Activated T-helper 2 cell treated with anti-CD3 and anti-CD28 coated beads, Interferon-gamma antibody, Interleukin-2, Interleukin-4, amounts not matched to agents 10 μg/mL and 5 μg/mL and 100 μg/mL, durations not matched to agents 14 hours and 24 hours and 36 hours (primary cell): ENCODE measurements at regions of chr20 and their contacts with region 1.

Region 1: GRCh38 chr20:35664544-35665221 is at the starts of genes CPNE1 and RBM12:
- DNase-seq: peak; percentile 93
- H3K4me3 Mint-ChIP-seq: peak within 1 kb of the TSS; percentile 95
- H3K27ac Mint-ChIP-seq: peak within 1 kb of the TSS; percentile 99
- H3K4me1 Mint-ChIP-seq: peaks cover 41% of the 10 kb centered on the region
- H3K27me3 Mint-ChIP-seq: no peaks in the 10 kb centered on the region
- total RNA-seq, gene CPNE1: 342 and 347 TPM in 2 replicates
- total RNA-seq, gene RBM12: 147 and 148 TPM in 2 replicates

Region 2: GRCh38 chr20:34876162-34877001 is 788.3 kb before region 1 on chr20 and contains the start of gene ACSS2:
- intact Hi-C with region 1: no loop called
- DNase-seq: peak; percentile 96
- H3K4me3 Mint-ChIP-seq: peak within 1 kb of the TSS; percentile 95
- H3K27ac Mint-ChIP-seq: peak within 1 kb of the TSS; percentile 84
- H3K4me1 Mint-ChIP-seq: peaks cover 66% of the 10 kb centered on the region
- H3K27me3 Mint-ChIP-seq: peaks cover 2% of the 10 kb centered on the region
- total RNA-seq, gene ACSS2: 51.3 and 59.4 TPM in 2 replicates

Region 3: GRCh38 chr20:35447082-35447789 is 217.4 kb before region 1 on chr20:
- intact Hi-C with region 1: no loop called
- DNase-seq: peak; percentile 85
- H3K4me3 Mint-ChIP-seq: peak overlapping the region; percentile 82
- H3K27ac Mint-ChIP-seq: no peak overlapping the region
- H3K4me1 Mint-ChIP-seq: peaks cover 6% of the 10 kb centered on the region
- H3K27me3 Mint-ChIP-seq: no peaks in the 10 kb centered on the region

Region 4: DNA sequence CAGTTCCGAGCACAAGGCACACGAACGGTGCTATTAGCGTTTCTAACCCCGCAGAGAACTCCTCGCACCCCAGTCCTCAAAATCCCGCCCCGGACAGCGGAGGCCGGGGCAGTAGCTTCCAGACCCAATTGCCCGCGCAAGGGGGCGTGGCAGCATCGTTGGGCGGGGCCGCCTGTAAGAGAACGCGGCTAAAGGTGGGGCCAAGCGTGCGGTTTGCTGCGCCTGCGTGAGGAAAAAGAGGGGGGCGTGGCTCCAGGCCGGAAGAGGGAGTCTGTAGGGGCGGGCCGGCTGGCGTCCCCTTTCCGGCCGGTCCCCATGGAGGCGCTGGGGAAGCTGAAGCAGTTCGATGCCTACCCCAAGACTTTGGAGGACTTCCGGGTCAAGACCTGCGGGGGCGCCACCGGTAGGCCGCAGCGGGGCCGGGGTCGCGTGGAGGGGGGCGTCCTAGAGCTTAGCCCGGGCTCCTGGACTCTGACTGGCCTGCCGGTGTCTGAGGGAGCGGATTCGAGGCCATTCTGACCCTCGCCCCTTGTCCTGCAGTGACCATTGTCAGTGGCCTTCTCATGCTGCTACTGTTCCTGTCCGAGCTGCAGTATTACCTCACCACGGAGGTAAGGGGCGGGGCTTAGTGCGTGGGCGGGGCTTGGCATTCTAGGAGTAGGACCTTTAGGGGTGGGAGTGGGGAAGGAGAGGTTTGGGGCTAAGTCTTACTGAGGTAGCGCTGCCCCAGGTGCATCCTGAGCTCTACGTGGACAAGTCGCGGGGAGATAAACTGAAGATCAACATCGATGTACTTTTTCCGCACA is 122.7 kb before region 1 on chr20 and contains the start of gene ERGIC3:
- intact Hi-C with region 1: loop called (anchors 5 kb)
- DNase-seq: peak; percentile 96
- H3K4me3 Mint-ChIP-seq: peak within 1 kb of the TSS; percentile 89
- H3K27ac Mint-ChIP-seq: peak within 1 kb of the TSS; percentile 90
- H3K4me1 Mint-ChIP-seq: peaks cover 12% of the 10 kb centered on the region
- H3K27me3 Mint-ChIP-seq: no peaks in the 10 kb centered on the region
- total RNA-seq, gene ERGIC3: 141 and 143 TPM in 2 replicates

Region 5: DNA sequence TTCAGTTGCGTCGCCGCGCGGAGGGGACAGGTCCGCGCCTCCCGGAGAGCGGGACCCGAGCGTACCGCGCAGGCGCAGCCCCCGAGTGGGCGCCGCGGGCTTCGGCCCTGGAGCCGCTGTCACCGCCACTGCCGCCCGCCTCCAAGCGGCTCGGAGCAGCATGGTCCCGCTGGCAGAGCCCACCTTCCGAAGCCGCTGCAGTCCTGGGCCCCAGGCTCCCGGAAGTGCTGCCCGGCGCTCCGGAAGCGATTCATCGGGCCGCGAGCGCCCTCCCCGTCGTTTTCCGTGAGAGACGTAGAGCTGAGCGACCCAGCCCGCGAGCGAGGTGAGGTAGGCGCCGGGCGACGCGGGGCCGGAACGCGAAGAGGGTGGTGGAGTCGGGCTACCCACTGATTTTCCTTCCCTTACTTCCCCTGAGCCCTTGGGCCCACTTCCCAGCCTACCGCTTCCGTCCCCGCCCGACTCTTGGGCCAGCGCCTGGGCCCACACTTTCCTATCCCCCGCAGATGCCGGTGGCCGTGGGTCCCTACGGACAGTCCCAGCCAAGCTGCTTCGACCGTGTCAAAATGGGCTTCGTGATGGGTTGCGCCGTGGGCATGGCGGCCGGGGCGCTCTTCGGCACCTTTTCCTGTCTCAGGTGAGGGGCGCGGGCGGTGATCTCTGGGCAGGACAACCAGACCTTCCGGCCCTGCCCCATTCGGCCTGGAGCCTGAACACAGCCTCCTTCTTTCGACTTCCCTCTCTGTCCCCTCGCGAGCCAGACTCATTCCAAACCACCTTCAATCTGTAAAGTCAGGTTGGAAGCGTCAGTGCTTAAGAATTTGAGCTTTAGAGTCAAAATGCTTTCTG is 34.7 kb after region 1 on chr20 and contains the starts of genes NFS1 and ROMO1:
- intact Hi-C with region 1: loop called (anchors 1 kb)
- DNase-seq: peak; percentile 82
- H3K4me3 Mint-ChIP-seq: peak within 1 kb of the TSS; percentile 94
- H3K27ac Mint-ChIP-seq: peak within 1 kb of the TSS; percentile 94
- H3K4me1 Mint-ChIP-seq: peaks cover 31% of the 10 kb centered on the region
- H3K27me3 Mint-ChIP-seq: no peaks in the 10 kb centered on the region
- total RNA-seq, gene NFS1: 39.1 and 39.8 TPM in 2 replicates
- total RNA-seq, gene ROMO1: 93.0 and 98.4 TPM in 2 replicates